ENCODE measurements at regions of chr16 and their contacts with region 1.

Region 1: GRCh38 chr16:29900102-29900887 is at the start of gene ASPHD1:
- DNase-seq: no peak
- H3K4me3 Mint-ChIP-seq: peak within 1 kb of the TSS; percentile 82
- H3K27ac Mint-ChIP-seq: peak within 1 kb of the TSS; percentile 58
- H3K4me1 Mint-ChIP-seq: peaks cover 14% of the 10 kb centered on the region
- H3K27me3 Mint-ChIP-seq: peaks cover 32% of the 10 kb centered on the region
- total RNA-seq, gene ASPHD1: 4.2 and 4.7 TPM in 2 replicates

Region 2: DNA sequence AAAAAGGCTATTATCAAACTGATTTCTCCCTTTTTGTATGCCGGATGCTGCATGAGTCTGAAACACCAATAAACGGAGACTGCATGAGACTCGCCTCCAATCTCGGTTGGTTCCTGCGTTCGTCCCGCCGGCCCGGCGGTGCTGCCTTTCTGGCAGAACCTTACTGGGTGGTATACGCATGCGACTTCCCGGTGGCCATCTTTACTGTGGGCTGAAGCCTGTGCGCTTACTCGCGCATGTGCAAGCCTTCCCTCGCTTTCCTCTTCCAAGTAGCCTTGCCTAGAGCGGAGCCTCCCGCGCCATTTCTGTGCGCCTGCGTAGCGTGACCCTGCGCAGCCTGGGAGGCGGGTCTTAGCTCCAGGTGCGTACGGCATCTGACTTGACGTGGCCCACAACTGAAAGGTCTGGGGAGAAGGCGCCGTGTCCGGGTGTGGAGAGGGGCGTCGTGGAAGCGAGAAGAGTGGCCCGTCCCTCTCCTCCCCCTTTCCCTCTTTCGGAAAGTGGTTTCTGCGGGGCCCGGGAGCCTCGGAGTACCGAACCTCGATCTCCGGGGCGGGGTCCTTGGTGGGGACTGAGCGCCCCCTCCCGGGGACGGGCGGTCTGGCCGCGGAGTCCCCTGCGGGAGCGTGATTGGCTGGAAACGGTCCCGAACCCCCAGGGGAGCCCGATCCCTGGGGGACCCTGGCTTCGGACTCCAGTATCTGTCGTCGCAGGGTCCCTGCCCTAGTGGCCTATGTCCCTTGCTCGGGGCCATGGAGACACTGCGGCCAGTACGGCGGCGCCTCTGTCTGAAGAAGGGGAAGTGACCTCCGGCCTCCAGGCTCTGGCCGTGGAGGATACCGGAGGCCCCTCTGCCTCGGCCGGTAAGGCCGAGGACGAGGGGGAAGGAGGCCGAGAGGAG is 84.3 kb before region 1 on chr16 and contains the start of gene PAGR1:
- intact Hi-C with region 1: loop called (anchors 2 kb)
- DNase-seq: peak; percentile 99
- H3K4me3 Mint-ChIP-seq: peak within 1 kb of the TSS; percentile 94
- H3K27ac Mint-ChIP-seq: peak within 1 kb of the TSS; percentile 98
- H3K4me1 Mint-ChIP-seq: peaks cover 48% of the 10 kb centered on the region
- H3K27me3 Mint-ChIP-seq: no peaks in the 10 kb centered on the region
- total RNA-seq, gene PAGR1: 29.2 and 30.8 TPM in 2 replicates

Region 3: GRCh38 chr16:29848420-29849297 is 51.6 kb before region 1 on chr16:
- intact Hi-C with region 1: no loop called
- DNase-seq: peak; percentile 67
- H3K4me3 Mint-ChIP-seq: no peak overlapping the region
- H3K27ac Mint-ChIP-seq: no peak overlapping the region
- H3K4me1 Mint-ChIP-seq: peaks cover 5% of the 10 kb centered on the region
- H3K27me3 Mint-ChIP-seq: no peaks in the 10 kb centered on the region

Region 4: DNA sequence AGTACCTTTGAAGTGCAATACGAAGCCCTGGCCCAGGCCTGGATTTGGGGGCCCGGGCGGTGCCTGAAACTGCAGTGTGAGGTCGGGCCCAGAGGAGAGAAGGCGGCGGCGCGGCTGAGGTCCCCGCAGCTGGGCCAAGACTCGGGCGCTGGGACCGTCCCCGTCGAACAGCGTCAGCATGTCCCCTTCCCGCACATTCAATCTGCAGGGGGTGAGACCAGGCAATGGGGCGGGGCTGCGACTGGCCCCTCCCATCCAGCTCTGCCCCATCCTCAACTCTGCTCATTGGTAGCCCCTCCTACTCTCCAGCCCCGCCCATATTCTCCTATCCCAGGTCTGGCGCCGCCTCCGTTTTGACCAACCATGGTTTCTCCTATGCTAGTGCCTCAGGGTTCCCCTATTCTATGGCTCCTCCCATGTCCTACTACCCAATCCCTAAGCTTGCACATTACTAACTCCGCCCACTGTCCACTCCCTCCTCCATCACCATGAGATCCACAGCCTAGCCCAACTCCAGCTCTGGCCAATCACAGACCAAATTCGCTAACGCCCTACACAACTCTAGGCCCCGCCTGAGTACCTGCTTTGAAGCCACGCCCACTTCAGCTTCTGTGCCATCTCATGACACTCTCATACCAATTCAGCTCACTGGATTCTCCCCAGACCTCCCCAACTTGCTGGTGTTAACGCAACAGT is 22.9 kb before region 1 on chr16:
- intact Hi-C with region 1: loop called (anchors 1 kb)
- DNase-seq: peak; percentile 59
- H3K4me3 Mint-ChIP-seq: peak overlapping the region; percentile 46
- H3K27ac Mint-ChIP-seq: no peak overlapping the region
- H3K4me1 Mint-ChIP-seq: peaks cover 14% of the 10 kb centered on the region
- H3K27me3 Mint-ChIP-seq: peaks cover 28% of the 10 kb centered on the region

Region 5: DNA sequence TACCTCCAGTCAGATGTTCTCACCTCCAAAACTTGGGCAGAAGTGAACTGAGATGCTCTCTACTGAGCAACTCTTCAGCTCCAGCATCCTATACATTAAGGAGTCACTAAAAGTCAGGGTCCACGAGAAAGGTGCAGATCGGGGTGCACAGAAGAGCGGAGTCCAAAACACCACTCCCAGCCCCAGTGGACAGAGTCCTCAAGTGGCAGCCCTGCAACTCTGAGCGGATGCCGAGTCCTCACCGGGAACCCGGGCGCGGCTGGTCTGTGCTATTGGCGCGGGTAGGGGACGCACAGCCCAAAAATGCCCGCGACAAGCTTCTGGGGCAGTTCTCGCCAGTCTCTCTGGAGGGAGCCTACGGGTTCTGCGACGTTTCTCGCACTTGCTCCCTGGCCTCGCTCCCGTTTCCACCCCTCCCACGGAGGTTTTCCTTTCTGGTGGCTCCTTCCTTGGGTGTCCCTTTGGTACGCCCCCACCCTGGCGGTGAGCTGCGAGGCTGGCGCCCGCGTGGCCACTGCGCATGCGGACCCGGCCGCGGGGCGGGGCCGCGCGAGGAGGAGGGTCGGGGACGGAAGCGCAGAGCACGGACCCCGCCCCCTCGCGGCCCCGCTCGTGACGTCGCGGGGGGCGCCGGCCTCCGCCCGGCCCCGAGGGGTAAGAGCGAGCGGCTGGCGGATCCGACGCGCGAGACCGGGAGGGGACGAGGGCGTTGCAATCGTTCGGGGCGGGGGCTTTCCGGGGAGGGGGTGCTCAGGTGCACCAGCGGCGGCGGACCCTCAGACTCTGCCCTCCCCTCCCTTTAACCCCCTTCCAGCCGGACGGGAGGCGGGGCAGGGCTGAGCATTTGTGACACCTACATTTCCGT is 61.4 kb after region 1 on chr16 and contains the start of gene TMEM219:
- intact Hi-C with region 1: loop called (anchors 1 kb)
- DNase-seq: peak; percentile 95
- H3K4me3 Mint-ChIP-seq: peak within 1 kb of the TSS; percentile 86
- H3K27ac Mint-ChIP-seq: peak within 1 kb of the TSS; percentile 83
- H3K4me1 Mint-ChIP-seq: peaks cover 24% of the 10 kb centered on the region
- H3K27me3 Mint-ChIP-seq: no peaks in the 10 kb centered on the region
- total RNA-seq, gene TMEM219: 41.5 and 43.7 TPM in 2 replicates

Region 6: GRCh38 chr16:29973384-29974246 is 73.3 kb after region 1 on chr16 and contains the start of gene TAOK2:
- intact Hi-C with region 1: loop called (anchors 1 kb)
- DNase-seq: peak; percentile 97
- H3K4me3 Mint-ChIP-seq: peak within 1 kb of the TSS; percentile 92
- H3K27ac Mint-ChIP-seq: peak within 1 kb of the TSS; percentile 91
- H3K4me1 Mint-ChIP-seq: peaks cover 36% of the 10 kb centered on the region
- H3K27me3 Mint-ChIP-seq: no peaks in the 10 kb centered on the region
- total RNA-seq, gene TAOK2: 38.5 and 39.7 TPM in 2 replicates

Measured in activated T-helper 1 cell treated with anti-CD3 and anti-CD28 coated beads, Interleukin-12 subunit alpha, Interleukin-12 subunit beta, Interleukin-2, Interleukin-4 antibody, amounts not matched to agents 30 ng/mL and 10 ng/mL and 1 ng/mL, durations not matched to agents 14 hours and 24 hours and 36 hours (primary cell).